Psoas muscle (tissue), 8 donors: ENCODE measurements at regions of chr2 and their contacts with region 1.

Region 1: GRCh38 chr2:47906157-47907038 is at the start of gene FBXO11:
- DNase-seq: peak; percentile 94 to 97
- ATAC-seq: peak; percentile 91 to 95 (median 92)
- H3K4me3 ChIP-seq: peak within 1 kb of the TSS; percentile 98
- H3K27ac ChIP-seq: peak within 1 kb of the TSS; percentile 98
- H3K4me1 ChIP-seq: peaks cover 20% of the 10 kb centered on the region
- H3K27me3 ChIP-seq: no peaks in the 10 kb centered on the region
- CTCF ChIP-seq: peak; percentile 56
- total RNA-seq, gene FBXO11: 31.0 to 39.4 (median 34.9) TPM

Region 2: GRCh38 chr2:47697000-47697601 is 209.3 kb before region 1 on chr2:
- intact Hi-C with region 1: no loop called
- DNase-seq: no peak
- ATAC-seq: no peak
- H3K4me3 ChIP-seq: no peak overlapping the region
- H3K27ac ChIP-seq: no peak overlapping the region
- H3K4me1 ChIP-seq: no peaks in the 10 kb centered on the region
- H3K27me3 ChIP-seq: peaks cover 0 to 5% (median 0%) of the 10 kb centered on the region in 3 donors
- CTCF ChIP-seq: no peak

Region 3: DNA sequence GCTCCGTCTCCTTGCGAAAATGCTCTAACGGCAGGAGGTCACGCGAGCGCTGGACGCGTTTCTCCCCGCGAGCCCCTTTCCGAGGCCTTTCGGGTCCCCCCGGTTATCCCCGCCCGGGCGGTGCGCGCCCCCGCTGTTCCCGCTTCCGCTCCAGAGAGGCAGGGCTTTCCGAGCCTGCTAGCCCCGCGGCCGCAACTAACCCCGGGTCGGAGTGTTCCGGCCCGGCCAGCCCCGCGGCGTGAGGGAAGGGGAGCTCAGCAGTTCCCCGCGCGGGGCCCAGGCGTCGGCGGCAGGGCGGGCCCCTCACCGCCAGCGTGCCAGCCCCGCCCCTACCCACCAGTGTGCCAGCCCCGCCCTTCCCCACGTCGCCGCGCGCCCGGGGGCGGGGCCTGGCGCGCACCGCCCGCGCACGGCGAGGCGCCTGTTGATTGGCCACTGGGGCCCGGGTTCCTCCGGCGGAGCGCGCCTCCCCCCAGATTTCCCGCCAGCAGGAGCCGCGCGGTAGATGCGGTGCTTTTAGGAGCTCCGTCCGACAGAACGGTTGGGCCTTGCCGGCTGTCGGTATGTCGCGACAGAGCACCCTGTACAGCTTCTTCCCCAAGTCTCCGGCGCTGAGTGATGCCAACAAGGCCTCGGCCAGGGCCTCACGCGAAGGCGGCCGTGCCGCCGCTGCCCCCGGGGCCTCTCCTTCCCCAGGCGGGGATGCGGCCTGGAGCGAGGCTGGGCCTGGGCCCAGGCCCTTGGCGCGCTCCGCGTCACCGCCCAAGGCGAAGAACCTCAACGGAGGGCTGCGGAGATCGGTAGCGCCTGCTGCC is 123.5 kb before region 1 on chr2 and contains the start of gene MSH6:
- intact Hi-C with region 1: loop called (anchors 5 to 10 kb)
- DNase-seq: peak; percentile 90 to 93
- ATAC-seq: peak; percentile 99 to 100 (median 100)
- H3K4me3 ChIP-seq: peak within 1 kb of the TSS; percentile 97
- H3K27ac ChIP-seq: peak within 1 kb of the TSS; percentile 82
- H3K4me1 ChIP-seq: no peaks in the 10 kb centered on the region
- H3K27me3 ChIP-seq: no peaks in the 10 kb centered on the region
- CTCF ChIP-seq: no peak
- total RNA-seq, gene MSH6: 12.0 to 21.1 (median 17.3) TPM

Region 4: DNA sequence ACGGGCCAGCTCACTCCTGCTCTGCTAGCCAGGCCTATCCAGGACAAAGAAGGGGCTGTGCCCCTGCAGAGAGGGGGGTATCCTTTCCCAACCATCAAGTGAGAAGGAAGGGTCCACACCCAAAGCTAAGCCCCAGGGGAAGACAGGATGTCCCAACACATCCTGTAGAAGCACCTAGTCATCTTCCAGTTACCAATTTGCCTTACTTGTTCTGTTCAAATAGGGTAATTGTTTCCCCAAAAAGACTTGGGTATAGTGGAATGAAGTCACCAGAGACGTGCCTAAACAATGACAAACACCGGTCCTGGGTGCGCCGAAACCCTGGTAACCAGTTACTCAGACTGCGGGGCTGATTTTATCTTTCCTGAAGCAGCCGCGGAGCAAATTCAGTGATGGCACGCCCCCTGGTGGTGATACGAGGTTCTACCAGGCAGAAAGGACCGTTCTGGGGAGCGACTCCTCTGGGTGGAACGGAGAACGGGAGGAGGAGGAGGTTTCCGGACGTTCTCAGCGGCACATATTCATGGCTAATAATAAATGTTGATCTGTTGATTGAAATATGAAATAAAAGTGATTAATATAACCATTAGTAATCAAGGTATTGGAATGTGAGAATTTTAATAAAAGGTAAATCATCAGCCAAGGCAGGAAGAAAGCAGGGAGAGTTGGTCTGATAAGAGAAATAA is 514.3 kb after region 1 on chr2:
- intact Hi-C with region 1: loop called in 1 of 2 experiments (anchors 5 kb)
- DNase-seq: peak; percentile 86 to 91
- ATAC-seq: peak; percentile 87 to 98 (median 93)
- H3K4me3 ChIP-seq: peak overlapping the region; percentile 24
- H3K27ac ChIP-seq: no peak overlapping the region
- H3K4me1 ChIP-seq: peaks cover 8% of the 10 kb centered on the region
- H3K27me3 ChIP-seq: no peaks in the 10 kb centered on the region
- CTCF ChIP-seq: peak; percentile 98